Naive thymus-derived CD4-positive, alpha-beta T cell (primary cell): ENCODE measurements at regions of chr7 and their contacts with region 1.

Region 1: GRCh38 chr7:87213811-87214210 is 5.7 kb downstream of the TMEM243 start:
- DNase-seq: no peak
- ATAC-seq: no peak
- H3K4me3 ChIP-seq: peak overlapping the region; percentile 13
- H3K4me3 Mint-ChIP-seq: peak overlapping the region; percentile 73 to 96 (median 87)
- H3K27ac ChIP-seq: peak overlapping the region; percentile 96
- H3K27ac Mint-ChIP-seq: peak overlapping the region; percentile 76 to 98 (median 95)
- H3K4me1 ChIP-seq: peaks cover 73 to 77% of the 10 kb centered on the region in 2 donors
- H3K4me1 Mint-ChIP-seq: peaks cover 42 to 90% (median 81%) of the 10 kb centered on the region in 7 donors
- H3K27me3 ChIP-seq: no peaks in the 10 kb centered on the region
- H3K27me3 Mint-ChIP-seq: no peaks in the 10 kb centered on the region

Region 2: DNA sequence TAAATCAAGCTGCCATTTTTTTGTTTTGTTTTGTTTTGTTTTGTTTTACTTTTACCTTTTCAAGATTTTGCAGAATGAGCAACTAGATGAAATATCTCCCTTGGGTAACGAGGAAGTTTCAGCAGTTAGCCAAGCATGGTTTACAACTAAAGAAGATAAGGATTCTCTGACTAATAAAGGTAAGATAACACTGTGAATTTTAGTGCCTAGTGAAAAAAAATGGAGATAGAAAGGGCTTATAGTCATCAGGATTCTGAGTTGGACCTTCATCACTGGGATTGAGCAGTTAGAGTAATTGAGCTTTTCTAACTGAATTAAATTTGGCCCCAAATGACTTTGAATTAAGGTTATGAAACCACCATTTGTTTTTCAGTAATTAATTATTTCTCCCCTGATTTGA is 40.3 kb before region 1 on chr7:
- CTCF ChIA-PET with region 1: no interaction called
- POLR2A ChIA-PET with region 1: interaction called, 18 read pairs
- intact Hi-C with region 1: no loop called
- DNase-seq: no peak
- ATAC-seq: no peak
- H3K4me3 ChIP-seq: no peak overlapping the region
- H3K4me3 Mint-ChIP-seq: no peak overlapping the region
- H3K27ac ChIP-seq: no peak overlapping the region
- H3K27ac Mint-ChIP-seq: peak overlapping the region in 7 of 9 donors; percentile 6 to 75 (median 45)
- H3K4me1 ChIP-seq: no peaks in the 10 kb centered on the region
- H3K4me1 Mint-ChIP-seq: peaks cover 17 to 48% (median 37%) of the 10 kb centered on the region in 7 donors
- H3K27me3 ChIP-seq: no peaks in the 10 kb centered on the region
- H3K27me3 Mint-ChIP-seq: no peaks in the 10 kb centered on the region

Region 3: GRCh38 chr7:87188930-87189329 is 24.9 kb before region 1 on chr7:
- CTCF ChIA-PET with region 1: interaction called, 5 read pairs
- POLR2A ChIA-PET with region 1: interaction called, 25 read pairs
- intact Hi-C with region 1: loop called in 1 of 2 experiments (anchors 5 kb)
- DNase-seq: no peak
- ATAC-seq: no peak
- H3K4me3 ChIP-seq: no peak overlapping the region
- H3K4me3 Mint-ChIP-seq: no peak overlapping the region
- H3K27ac ChIP-seq: no peak overlapping the region
- H3K27ac Mint-ChIP-seq: peak overlapping the region in 5 of 9 donors; percentile 7 to 69 (median 26)
- H3K4me1 ChIP-seq: no peaks in the 10 kb centered on the region
- H3K4me1 Mint-ChIP-seq: peaks cover 2 to 54% (median 30%) of the 10 kb centered on the region in 7 donors
- H3K27me3 ChIP-seq: no peaks in the 10 kb centered on the region
- H3K27me3 Mint-ChIP-seq: no peaks in the 10 kb centered on the region

Region 4: GRCh38 chr7:87199700-87200450 is 13.9 kb before region 1 on chr7:
- CTCF ChIA-PET with region 1: interaction called, 9 read pairs
- POLR2A ChIA-PET with region 1: interaction called, 35 read pairs
- intact Hi-C with region 1: loop called (anchors 1 to 2 kb)
- DNase-seq: no peak
- ATAC-seq: peak; percentile 10
- H3K4me3 ChIP-seq: no peak overlapping the region
- H3K4me3 Mint-ChIP-seq: peak overlapping the region in 5 of 10 donors; percentile 3 to 15 (median 11)
- H3K27ac ChIP-seq: peak overlapping the region; percentile 36
- H3K27ac Mint-ChIP-seq: peak overlapping the region in 8 of 9 donors; percentile 37 to 88 (median 79)
- H3K4me1 ChIP-seq: peaks cover 0 to 40% of the 10 kb centered on the region in 2 donors
- H3K4me1 Mint-ChIP-seq: peaks cover 35 to 81% (median 68%) of the 10 kb centered on the region in 7 donors
- H3K27me3 ChIP-seq: no peaks in the 10 kb centered on the region
- H3K27me3 Mint-ChIP-seq: no peaks in the 10 kb centered on the region